Activated B cell treated with CpG ODN at 0.5 μM for 24 hours (primary cell): ENCODE measurements at regions of chr17 and their contacts with region 1.

Region 1: DNA sequence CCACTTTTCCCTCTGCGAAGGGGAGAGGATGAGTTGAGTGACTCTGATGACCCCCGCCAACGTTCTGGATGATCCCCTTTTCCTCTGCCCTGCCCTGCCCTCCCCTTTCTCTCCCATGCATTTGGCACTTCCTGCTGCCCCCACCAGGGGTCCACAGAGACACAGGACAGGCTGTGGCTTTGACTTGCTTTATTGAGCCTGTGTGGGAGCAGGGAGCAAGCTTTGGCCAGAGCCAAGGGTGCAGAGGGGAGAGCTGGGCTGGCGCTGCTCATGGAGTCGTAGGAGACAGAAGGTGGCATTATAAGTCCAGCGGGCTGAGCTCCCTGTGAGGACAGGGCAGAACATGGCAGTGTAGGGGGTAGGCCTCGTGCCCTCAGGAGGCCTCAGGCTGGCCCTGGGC is 1.6 kb downstream of the PPY start:
- DNase-seq: no peak
- ATAC-seq: no peak
- H3K4me3 Mint-ChIP-seq: no peak overlapping the region
- H3K27ac Mint-ChIP-seq: no peak overlapping the region
- H3K4me1 Mint-ChIP-seq: peaks cover 8% of the 10 kb centered on the region
- H3K27me3 Mint-ChIP-seq: peaks cover 23% of the 10 kb centered on the region
- CTCF ChIP-seq: no peak

Region 2: DNA sequence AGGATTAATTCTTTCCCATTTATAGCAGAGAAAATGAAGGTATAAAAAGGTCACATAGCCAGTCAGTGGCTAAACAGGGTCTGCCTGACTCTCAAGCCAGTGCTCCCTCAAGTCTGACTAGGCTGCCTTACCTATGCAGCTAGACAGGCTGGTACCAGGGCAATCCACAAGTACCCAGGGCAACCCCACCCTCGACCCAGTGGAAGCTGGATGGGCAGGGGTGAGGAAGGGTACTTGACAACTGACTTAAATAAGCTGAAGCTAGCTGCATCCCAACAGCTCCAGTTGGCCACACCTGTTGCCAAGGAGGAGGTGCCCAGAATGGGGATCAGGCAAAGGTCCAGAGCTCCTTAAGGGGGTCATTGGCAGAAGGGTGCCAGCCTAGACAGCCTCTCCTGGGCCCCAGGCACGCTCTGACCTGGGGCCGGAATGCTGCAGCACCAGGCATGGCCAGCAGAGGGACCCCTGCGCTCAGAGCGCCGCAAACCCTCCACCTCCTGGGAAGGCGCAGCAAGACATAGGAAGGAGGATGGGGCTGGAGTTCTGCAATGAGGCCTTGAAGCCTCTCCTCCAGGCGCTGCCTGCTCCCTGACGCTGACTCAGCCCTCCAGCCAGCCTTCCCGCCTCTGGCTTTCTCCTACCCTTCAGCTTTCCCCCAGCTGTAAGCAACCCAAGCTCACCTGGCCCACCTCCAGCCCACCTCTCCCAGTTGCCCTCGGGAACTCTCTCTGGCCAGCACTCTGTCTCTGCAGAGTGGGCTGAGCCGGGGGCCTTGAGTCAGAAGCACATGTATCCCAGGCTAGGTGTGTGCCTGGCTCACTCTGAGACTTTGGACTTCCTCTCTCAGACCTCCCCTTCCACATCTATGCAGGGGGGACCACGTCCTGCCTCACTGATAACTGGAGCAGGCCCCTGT is 62.1 kb before region 1 on chr17:
- CTCF ChIA-PET with region 1: no interaction called
- POLR2A ChIA-PET with region 1: no interaction called
- intact Hi-C with region 1: loop called (anchors 2 kb)
- DNase-seq: peak; percentile 73
- ATAC-seq: peak; percentile 95
- H3K4me3 Mint-ChIP-seq: no peak overlapping the region
- H3K27ac Mint-ChIP-seq: no peak overlapping the region
- H3K4me1 Mint-ChIP-seq: no peaks in the 10 kb centered on the region
- H3K27me3 Mint-ChIP-seq: peaks cover 28% of the 10 kb centered on the region
- CTCF ChIP-seq: peak; percentile 70

Region 3: DNA sequence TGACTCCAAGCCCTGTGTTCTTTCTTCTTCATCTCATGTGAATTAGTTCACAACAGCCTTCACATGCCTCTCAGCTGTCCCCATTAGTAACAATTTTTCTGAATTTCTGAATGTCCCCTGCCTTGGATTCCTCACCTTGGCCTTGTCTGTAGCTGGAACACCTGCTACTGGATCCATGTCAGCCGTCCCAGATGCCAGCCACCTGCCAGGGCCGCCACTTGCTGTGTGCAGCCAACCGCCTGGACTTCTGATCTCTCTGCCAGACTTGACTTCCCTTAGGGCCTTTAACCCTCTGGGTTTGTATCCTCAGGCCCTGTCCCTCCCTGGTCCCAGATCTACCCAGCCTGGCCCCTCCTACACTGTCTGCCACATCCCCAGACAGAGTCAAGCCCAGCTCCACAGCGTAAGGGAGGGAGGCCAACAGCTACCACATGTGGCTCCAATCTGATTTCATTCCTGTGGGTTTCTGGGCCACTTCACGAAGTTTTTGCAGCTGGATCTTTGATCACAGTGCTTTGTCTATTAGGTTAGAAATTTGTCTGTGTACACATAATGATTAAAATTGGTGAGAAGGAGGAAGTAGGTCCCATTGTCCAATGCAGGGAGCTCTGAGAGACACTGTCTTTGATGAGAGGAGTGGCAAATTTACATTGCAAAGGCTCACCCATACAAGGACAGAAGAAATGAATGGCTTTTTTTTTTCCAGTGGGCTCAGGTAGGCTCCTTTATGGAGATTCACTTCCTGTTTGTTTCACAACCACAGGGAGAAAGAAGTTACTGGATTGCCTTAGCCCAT is 48.6 kb before region 1 on chr17:
- CTCF ChIA-PET with region 1: no interaction called
- POLR2A ChIA-PET with region 1: no interaction called
- intact Hi-C with region 1: no loop called
- DNase-seq: no peak
- ATAC-seq: no peak
- H3K4me3 Mint-ChIP-seq: no peak overlapping the region
- H3K27ac Mint-ChIP-seq: no peak overlapping the region
- H3K4me1 Mint-ChIP-seq: no peaks in the 10 kb centered on the region
- H3K27me3 Mint-ChIP-seq: peaks cover 23% of the 10 kb centered on the region
- CTCF ChIP-seq: no peak

Region 4: DNA sequence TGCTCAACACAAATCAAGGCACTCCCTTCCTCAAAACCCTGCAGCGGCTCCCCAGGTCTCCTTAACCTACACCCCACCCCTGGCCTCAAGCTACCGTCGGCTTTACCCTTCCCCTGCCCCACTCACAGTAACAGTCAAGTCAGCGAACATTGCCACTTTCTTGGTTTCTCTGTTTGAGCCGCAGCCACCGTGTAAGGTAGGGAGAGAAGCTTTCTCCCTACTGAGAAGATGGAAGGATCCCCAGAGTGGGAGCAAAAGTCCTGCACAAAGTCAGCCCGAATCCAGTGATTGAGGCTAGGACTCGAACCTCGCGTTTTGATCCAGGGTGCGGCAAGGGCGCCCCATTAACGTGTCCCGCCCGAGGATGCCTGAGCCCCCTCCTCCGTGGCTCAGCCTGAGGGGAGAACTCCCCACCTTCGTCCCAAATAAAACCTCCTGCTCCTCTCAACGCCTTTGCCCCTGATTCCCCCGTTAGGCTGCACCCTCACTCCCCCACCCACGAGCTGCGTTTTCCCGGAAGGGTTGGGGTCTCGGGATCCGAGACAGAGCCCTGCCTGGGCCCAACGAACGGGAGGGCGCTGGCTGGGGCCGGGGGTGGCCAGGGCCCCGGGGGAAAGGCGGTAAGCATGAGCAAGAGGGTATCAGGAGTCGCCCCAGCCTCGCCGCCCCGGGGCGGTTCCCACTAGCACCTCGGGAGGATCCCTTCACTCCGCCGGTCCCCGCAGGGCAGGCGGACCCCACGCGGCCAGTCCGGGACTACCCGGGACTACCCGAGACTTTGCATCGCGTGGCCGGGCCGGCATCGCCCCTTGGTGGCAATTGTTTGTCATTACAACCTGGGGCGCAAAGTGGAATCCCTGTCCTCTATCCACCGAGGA is 53.9 kb after region 1 on chr17:
- CTCF ChIA-PET with region 1: interaction called, 15 read pairs
- POLR2A ChIA-PET with region 1: no interaction called
- intact Hi-C with region 1: loop called (anchors 1 kb)
- DNase-seq: peak; percentile 50
- ATAC-seq: peak; percentile 85
- H3K4me3 Mint-ChIP-seq: no peak overlapping the region
- H3K27ac Mint-ChIP-seq: no peak overlapping the region
- H3K4me1 Mint-ChIP-seq: peaks cover 4% of the 10 kb centered on the region
- H3K27me3 Mint-ChIP-seq: peaks cover 23% of the 10 kb centered on the region
- CTCF ChIP-seq: no peak

Region 5: GRCh38 chr17:44006598-44007345 is 66.1 kb after region 1 on chr17:
- CTCF ChIA-PET with region 1: no interaction called
- POLR2A ChIA-PET with region 1: no interaction called
- intact Hi-C with region 1: no loop called
- DNase-seq: peak; percentile 88
- ATAC-seq: peak; percentile 91
- H3K4me3 Mint-ChIP-seq: peak overlapping the region; percentile 90
- H3K27ac Mint-ChIP-seq: peak overlapping the region; percentile 76
- H3K4me1 Mint-ChIP-seq: peaks cover 24% of the 10 kb centered on the region
- H3K27me3 Mint-ChIP-seq: peaks cover 12% of the 10 kb centered on the region
- CTCF ChIP-seq: no peak

Region 6: DNA sequence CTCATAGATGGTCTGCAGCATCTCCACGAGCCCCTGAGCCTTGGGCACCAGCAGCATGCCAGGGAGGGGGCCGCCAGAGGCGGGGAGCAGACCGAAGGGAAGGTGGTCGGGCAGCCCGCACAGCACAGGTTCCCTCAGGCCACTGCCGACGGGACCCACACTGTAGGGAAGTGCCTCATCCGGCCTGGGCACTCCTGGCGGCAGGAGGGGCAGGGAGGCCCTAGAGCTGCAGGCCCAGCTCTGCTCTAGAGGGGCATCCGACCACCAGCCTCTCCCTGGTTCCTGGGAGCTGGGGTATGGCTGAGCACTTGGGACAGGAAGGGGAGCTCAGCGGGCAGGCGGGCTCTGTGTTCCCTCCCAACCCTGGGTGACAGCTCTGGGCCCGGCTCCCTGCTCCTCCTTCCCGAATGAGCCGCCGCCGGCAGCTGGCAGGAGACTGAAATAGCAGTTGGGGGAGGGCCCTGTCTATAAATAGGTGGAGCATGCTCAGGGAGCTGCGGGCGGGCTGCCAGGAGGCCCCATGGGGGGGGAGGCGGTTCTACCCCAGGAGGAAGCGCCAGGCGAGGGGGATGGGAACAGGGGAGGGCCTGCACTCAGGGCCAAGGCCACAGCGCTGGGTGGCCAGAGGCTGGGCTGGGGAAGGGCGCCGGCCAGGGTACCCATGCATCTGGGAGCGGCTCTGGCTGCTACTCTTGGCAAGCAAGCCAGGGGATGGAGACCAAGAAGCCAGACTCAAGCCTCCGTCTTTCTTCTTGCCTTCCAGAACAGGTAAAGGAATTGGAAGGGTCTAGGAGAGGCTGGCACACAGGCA is 170.4 kb after region 1 on chr17:
- CTCF ChIA-PET with region 1: interaction called, 14 read pairs
- POLR2A ChIA-PET with region 1: no interaction called
- intact Hi-C with region 1: loop called (anchors 1 kb)
- DNase-seq: peak; percentile 55
- ATAC-seq: peak; percentile 85
- H3K4me3 Mint-ChIP-seq: peak overlapping the region; percentile 44
- H3K27ac Mint-ChIP-seq: no peak overlapping the region
- H3K4me1 Mint-ChIP-seq: peaks cover 40% of the 10 kb centered on the region
- H3K27me3 Mint-ChIP-seq: no peaks in the 10 kb centered on the region
- CTCF ChIP-seq: no peak

Region 7: DNA sequence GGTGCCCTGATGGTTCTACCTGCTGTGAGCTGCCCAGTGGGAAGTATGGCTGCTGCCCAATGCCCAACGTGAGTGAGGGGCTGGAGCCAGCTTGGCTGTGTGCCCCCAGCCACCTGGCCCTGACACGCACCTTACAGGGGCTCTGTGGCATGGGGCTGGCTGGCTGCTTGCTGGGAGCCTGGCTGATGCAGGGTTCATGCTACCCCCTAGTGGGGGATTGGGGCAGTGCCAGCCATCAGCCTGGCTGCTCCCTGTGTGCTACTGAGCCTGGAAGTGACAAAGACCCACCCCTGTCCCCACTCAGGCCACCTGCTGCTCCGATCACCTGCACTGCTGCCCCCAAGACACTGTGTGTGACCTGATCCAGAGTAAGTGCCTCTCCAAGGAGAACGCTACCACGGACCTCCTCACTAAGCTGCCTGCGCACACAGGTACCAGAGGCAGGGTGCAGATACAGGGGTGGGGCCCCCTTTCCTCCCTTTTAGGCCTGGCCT is 410.1 kb after region 1 on chr17:
- CTCF ChIA-PET with region 1: interaction called, 3 read pairs
- POLR2A ChIA-PET with region 1: no interaction called
- intact Hi-C with region 1: loop called (anchors 2 kb)
- DNase-seq: peak; percentile 71
- ATAC-seq: peak; percentile 42
- H3K4me3 Mint-ChIP-seq: no peak overlapping the region
- H3K27ac Mint-ChIP-seq: peak overlapping the region; percentile 65
- H3K4me1 Mint-ChIP-seq: peaks cover 54% of the 10 kb centered on the region
- H3K27me3 Mint-ChIP-seq: no peaks in the 10 kb centered on the region
- CTCF ChIP-seq: no peak